PC-9 (cell line): ENCODE measurements at regions of chr11 and their contacts with region 1.

Region 1: GRCh38 chr11:75561426-75562047 is 516 bp upstream of the SERPINH1 start:
- DNase-seq: no peak
- H3K4me3 ChIP-seq: peak overlapping the region; percentile 85
- H3K27ac ChIP-seq: 0 out of 2 replicates have a peak overlapping the region, but pooled peaks have one; percentile 57
- H3K4me1 ChIP-seq: peaks cover 45% of the 10 kb centered on the region
- H3K27me3 ChIP-seq: no peaks in the 10 kb centered on the region
- CTCF ChIP-seq: no peak

Region 2: GRCh38 chr11:75280227-75280701 is 281.3 kb before region 1 on chr11:
- CTCF ChIA-PET with region 1: no interaction called
- POLR2A ChIA-PET with region 1: no interaction called
- intact Hi-C with region 1: no loop called
- DNase-seq: peak; percentile 48 to 73
- H3K4me3 ChIP-seq: no peak overlapping the region
- H3K27ac ChIP-seq: no peak overlapping the region
- H3K4me1 ChIP-seq: no peaks in the 10 kb centered on the region
- H3K27me3 ChIP-seq: no peaks in the 10 kb centered on the region
- CTCF ChIP-seq: peak; percentile 98

Region 3: GRCh38 chr11:75603791-75604736 is 42.5 kb after region 1 on chr11:
- CTCF ChIA-PET with region 1: no interaction called
- POLR2A ChIA-PET with region 1: no interaction called
- intact Hi-C with region 1: no loop called
- DNase-seq: peak; percentile 16 to 60
- H3K4me3 ChIP-seq: no peak overlapping the region
- H3K27ac ChIP-seq: no peak overlapping the region
- H3K4me1 ChIP-seq: peaks cover 13% of the 10 kb centered on the region
- H3K27me3 ChIP-seq: no peaks in the 10 kb centered on the region
- CTCF ChIP-seq: no peak

Region 4: DNA sequence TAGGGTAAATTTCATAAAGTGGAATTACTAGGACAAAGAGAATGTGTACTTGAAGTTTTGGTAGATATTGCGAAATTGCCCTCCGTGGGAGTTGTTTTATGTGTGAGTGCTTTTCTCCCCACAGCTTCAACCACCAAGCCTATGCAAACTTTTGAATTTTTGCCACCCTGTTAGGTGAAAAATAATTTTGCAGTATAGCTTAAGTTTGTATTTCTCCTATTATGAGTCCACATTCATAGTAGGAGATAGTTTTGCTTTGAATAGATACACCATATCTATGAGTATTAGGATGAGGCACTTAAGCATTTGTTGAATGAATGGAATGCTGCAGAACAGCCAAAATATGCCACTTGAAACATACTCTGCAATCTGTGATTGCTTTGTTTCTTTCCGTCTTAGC is 297.1 kb after region 1 on chr11:
- CTCF ChIA-PET with region 1: no interaction called
- POLR2A ChIA-PET with region 1: no interaction called
- intact Hi-C with region 1: no loop called
- DNase-seq: peak in 1 of 2 experiments; percentile 36
- H3K4me3 ChIP-seq: no peak overlapping the region
- H3K27ac ChIP-seq: no peak overlapping the region
- H3K4me1 ChIP-seq: peaks cover 26% of the 10 kb centered on the region
- H3K27me3 ChIP-seq: no peaks in the 10 kb centered on the region
- CTCF ChIP-seq: no peak

Region 5: DNA sequence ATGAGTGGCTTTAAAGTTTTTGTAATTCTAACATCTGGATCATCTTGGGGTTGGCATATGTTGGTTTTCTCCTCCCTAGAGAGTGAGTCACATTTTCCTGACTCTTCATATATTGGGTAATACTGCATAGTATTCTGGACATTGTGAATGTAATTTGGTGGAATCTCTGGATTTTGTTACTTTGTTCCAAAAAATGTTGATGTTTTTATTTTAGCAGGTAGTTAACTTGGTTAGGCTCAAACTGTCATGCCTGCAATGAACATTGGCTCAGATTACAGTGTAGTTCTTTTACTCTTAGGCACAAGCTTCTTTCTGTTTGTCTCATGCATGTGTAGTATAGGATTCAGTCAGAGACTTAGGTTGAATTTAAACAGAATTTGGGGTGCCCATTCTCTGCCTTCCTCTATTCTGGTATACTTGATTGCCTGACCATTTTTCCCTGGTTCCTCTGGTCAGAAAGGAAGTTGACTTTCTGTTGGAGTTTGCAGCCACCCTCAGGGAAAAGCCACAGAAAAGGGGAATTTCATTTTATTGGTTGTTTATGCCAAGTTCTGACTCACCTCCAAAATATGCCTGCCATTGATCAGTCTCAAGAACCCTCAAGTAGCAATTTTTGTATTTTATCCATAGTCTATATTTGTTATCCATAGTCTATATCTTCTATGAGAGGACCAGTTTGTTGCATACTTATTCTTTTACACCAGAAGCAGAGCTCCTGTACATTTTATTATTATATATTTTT is 405.2 kb after region 1 on chr11:
- CTCF ChIA-PET with region 1: no interaction called
- POLR2A ChIA-PET with region 1: no interaction called
- intact Hi-C with region 1: no loop called
- DNase-seq: no peak
- H3K4me3 ChIP-seq: no peak overlapping the region
- H3K27ac ChIP-seq: no peak overlapping the region
- H3K4me1 ChIP-seq: peaks cover 12% of the 10 kb centered on the region
- H3K27me3 ChIP-seq: no peaks in the 10 kb centered on the region
- CTCF ChIP-seq: no peak

Region 6: DNA sequence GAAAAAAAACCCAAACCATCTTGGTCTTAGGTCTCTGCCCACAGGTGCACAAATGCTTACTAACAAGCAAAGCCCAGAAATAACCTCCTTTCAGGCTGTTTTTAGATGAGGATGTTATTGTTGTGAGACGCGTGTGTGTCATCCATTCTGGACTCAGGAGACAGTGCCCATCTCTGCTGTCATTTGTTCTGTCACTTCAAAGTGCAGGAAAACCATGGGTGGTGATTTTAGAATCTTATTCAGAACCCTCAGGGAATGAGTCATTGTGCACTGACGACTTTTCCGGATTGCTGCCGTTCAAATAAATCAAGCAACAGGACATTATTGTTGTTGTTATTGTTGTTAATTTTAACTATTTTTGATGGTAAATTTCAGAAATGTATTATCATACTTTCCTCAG is 998.7 kb after region 1 on chr11:
- CTCF ChIA-PET with region 1: interaction called, 10 read pairs
- POLR2A ChIA-PET with region 1: no interaction called
- intact Hi-C with region 1: no loop called
- DNase-seq: no peak
- H3K4me3 ChIP-seq: no peak overlapping the region
- H3K27ac ChIP-seq: no peak overlapping the region
- H3K4me1 ChIP-seq: no peaks in the 10 kb centered on the region
- H3K27me3 ChIP-seq: no peaks in the 10 kb centered on the region
- CTCF ChIP-seq: no peak